ENCODE measurements at regions of chr4 and their contacts with region 1.

Region 1: GRCh38 chr4:145868637-145869409 is 69.8 kb downstream of the ZNF827 start:
- DNase-seq: peak; percentile 46
- ATAC-seq: peak; percentile 37
- H3K4me3 ChIP-seq: no peak overlapping the region
- H3K27ac ChIP-seq: no peak overlapping the region
- H3K4me1 ChIP-seq: no peaks in the 10 kb centered on the region
- H3K27me3 ChIP-seq: no peaks in the 10 kb centered on the region
- CTCF ChIP-seq: peak; percentile 56

Region 2: DNA sequence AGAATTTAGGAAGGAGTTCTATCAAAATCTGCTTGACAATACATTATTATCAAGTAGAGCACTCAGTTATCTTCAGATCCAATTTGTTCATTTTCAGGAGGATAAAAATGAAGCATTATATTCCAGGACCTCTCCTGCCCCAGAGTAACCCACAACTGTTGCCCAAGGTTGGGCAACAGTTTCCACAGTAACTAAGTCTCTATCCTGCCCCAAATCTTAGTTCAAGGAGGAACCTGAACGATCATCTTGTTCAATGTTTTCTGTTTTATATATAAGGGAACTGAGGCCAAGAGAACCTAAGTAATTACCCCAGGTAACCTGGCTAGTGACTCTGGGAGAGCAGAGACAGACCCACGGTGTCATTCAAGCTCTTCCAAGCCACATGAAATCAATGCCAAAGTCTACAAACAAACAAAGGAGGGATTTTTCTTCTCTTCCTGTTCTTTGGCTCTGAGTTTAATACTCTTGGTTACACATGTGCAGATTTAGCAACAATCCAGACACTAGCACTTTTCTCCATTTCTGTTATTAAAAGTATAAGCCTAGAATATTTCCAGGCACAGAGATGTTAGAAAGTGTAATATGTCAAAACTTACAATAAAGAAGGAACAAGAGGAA is 83.3 kb before region 1 on chr4:
- CTCF ChIA-PET with region 1: no interaction called
- POLR2A ChIA-PET with region 1: no interaction called
- intact Hi-C with region 1: loop called (anchors 5 kb)
- DNase-seq: peak; percentile 48
- ATAC-seq: peak; percentile 25; the same call in 1 of the 2 replicates
- H3K4me3 ChIP-seq: no peak overlapping the region
- H3K27ac ChIP-seq: peak overlapping the region; percentile 1; the same call in 1 of the 2 replicates
- H3K4me1 ChIP-seq: peaks cover 54% of the 10 kb centered on the region
- H3K27me3 ChIP-seq: no peaks in the 10 kb centered on the region
- CTCF ChIP-seq: no peak